Left ventricle myocardium inferior (tissue), 1 donor: ENCODE measurements at regions of chr12 and their contacts with region 1.

Region 1: GRCh38 chr12:1117970-1118563 is 127.0 kb downstream of the ERC1 start:
- DNase-seq: peak; percentile 48
- H3K4me3 ChIP-seq: no peak overlapping the region
- H3K27ac ChIP-seq: no peak overlapping the region
- H3K4me1 ChIP-seq: no peaks in the 10 kb centered on the region
- H3K27me3 ChIP-seq: no peaks in the 10 kb centered on the region
- CTCF ChIP-seq: peak; percentile 97

Region 2: DNA sequence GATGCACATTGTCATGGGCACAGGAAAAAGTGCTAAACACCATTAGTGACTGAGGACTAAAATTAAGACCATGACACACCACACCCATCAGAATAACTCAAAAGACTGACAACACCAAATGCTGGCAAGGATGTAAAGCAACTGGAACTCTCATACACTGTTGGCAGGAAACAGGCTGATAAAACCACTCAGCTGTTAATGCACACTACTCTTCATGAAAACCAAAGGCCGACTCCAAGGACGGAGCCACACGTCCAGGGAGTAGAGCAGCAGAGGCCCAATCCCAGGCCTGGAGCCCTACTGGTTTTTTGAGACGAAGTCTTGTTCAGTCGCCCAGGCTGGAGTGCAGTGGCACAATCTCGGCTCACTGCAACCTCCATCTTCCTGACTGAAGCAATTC is 175.0 kb before region 1 on chr12:
- intact Hi-C with region 1: no loop called
- DNase-seq: peak; percentile 30
- H3K4me3 ChIP-seq: no peak overlapping the region
- H3K27ac ChIP-seq: peak overlapping the region; percentile 76
- H3K4me1 ChIP-seq: peaks cover 22% of the 10 kb centered on the region
- H3K27me3 ChIP-seq: no peaks in the 10 kb centered on the region
- CTCF ChIP-seq: no peak

Region 3: GRCh38 chr12:1583421-1584078 is 465.5 kb after region 1 on chr12:
- intact Hi-C with region 1: loop called (anchors 2 kb)
- DNase-seq: no peak
- H3K4me3 ChIP-seq: peak overlapping the region; percentile 44
- H3K27ac ChIP-seq: no peak overlapping the region
- H3K4me1 ChIP-seq: peaks cover 41% of the 10 kb centered on the region
- H3K27me3 ChIP-seq: no peaks in the 10 kb centered on the region
- CTCF ChIP-seq: peak; percentile 89

Region 4: GRCh38 chr12:1836849-1837421 is 718.9 kb after region 1 on chr12:
- intact Hi-C with region 1: no loop called
- DNase-seq: no peak
- H3K4me3 ChIP-seq: no peak overlapping the region
- H3K27ac ChIP-seq: no peak overlapping the region
- H3K4me1 ChIP-seq: no peaks in the 10 kb centered on the region
- H3K27me3 ChIP-seq: peaks cover 57% of the 10 kb centered on the region
- CTCF ChIP-seq: no peak